ENCODE measurements at regions of chr22 and their contacts with region 1.

Region 1: GRCh38 chr22:42893371-42894150 is 36.5 kb upstream of the ARFGAP3 start:
- DNase-seq: no peak
- ATAC-seq: no peak

Region 2: DNA sequence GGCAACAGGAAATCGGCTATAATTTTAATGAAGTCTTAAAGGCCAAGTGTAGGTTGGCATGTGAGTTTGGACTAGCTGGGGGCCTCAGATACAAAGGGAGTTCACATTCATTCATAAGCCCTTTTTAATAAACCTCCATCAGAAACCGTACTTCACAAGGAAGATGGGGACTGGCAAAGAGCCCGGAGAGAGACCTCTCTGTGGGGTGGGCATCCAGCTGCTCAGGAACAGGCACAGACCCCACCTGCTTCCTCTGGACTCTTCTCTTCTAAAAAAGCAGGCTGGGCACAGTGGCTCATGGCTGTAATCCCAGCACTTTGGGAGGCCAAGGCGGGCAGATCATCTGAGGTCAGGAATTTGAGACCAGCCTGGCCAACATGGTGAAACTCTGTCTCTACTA is 32.6 kb before region 1 on chr22:
- intact Hi-C with region 1: loop called (anchors 1 kb)
- DNase-seq: no peak
- ATAC-seq: no peak

Region 3: DNA sequence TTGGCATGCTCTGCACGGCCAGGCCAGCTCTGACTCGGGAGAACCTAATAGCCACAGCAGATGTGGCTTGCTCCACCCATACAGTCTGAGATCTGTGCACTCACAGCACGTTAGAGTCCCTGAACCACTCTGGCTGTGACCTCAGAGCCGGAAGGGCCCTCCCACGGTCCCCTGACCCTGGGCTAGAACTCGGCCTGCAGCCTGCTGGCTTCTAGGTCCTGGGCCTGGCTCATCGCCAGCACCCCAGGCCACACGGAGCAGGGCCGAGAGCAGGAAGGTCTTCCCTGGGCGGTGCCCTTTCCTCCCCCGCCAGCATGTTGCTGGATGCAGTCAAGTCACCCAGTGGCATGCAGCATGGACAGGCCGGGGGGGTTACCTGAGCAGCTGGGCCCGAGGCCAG is 328.7 kb after region 1 on chr22:
- intact Hi-C with region 1: no loop called
- DNase-seq: no peak
- ATAC-seq: peak; percentile 56